GM10248 (cell line): ENCODE measurements at regions of chr12 and their contacts with region 1.

Region 1: GRCh38 chr12:85920324-85920947 is 46.3 kb downstream of the NTS start:
- DNase-seq: peak; percentile 23
- CTCF ChIP-seq: peak; percentile 49

Region 2: GRCh38 chr12:85468356-85469157 is 451.9 kb before region 1 on chr12:
- CTCF ChIA-PET with region 1: interaction called, 18 read pairs
- POLR2A ChIA-PET with region 1: no interaction called
- DNase-seq: peak; percentile 55
- CTCF ChIP-seq: peak; percentile 80

Region 3: DNA sequence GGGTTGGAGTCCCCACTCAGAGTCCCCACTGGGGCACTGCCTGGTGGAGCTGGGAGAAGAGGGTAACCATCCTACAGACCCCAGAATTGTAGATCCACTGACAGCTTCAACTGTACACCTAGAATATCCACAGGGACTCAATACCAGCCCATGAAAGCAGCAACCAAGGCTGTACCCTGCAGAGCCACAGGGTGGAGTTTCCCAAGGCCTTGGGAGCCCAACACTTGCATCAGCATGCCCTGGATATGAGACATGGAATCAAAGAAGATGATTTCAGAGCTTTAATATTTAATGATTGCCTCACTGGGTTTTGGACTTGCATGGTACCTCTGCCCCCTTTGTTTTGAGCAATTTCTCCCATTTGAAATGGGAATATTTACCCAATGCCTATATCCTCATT is 164.7 kb before region 1 on chr12:
- CTCF ChIA-PET with region 1: no interaction called
- POLR2A ChIA-PET with region 1: no interaction called
- DNase-seq: no peak
- CTCF ChIP-seq: no peak

Region 4: DNA sequence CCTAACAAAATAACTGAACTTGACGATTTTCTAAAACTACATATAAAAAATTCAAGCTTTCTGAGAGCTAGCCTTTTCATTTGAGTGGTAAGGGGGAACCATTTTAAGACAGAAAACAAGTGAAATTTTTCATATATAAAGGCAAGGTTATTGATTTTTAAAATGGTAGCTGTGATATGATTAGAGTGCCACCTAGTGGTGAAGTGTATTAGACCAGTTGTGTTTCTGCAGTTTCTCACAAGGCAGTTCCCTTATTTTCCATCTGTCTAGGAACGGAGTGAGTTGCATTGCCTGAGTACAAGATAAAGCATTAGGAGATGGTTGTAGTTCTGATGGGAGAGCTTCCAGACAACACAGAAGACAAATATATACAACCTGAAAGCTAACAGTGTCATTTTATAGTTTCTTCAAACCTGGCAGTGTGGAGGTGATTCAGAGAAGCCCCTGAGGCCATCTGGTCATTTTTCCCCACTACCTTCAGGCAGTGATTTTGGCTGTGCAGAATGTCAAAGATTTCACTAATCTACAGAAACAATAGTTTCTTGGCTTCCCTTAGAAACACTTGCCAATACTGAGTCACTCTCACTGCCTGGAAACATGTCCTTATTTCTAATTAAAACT is 1927.9 kb after region 1 on chr12:
- CTCF ChIA-PET with region 1: interaction called, 12 read pairs
- POLR2A ChIA-PET with region 1: no interaction called
- DNase-seq: peak; percentile 30
- CTCF ChIP-seq: peak; percentile 71